ENCODE measurements at regions of chr3 and their contacts with region 1.

Region 1: DNA sequence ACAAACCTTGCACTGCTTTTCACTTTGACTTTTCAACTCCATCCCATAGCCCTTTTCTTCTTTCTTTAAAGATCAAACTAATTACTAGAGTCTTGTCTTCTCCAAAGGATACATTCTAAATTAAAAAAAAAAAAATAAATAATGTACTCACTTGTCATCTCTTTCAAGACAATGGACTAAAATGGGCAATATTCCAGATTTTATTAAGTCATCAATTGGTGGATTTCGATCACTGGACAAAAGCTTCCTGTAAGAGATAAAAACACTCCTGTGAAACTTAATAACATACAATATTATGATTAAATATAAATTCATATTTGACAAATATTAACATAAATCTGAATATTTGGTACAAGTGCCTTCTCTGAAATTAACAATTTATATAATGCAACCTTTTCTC is 34.1 kb downstream of the KPNA4 start:
- DNase-seq: no peak
- ATAC-seq: no peak
- H3K4me3 ChIP-seq: no peak overlapping the region
- H3K27ac ChIP-seq: no peak overlapping the region
- H3K4me1 ChIP-seq: no peaks in the 10 kb centered on the region
- H3K27me3 ChIP-seq: no peaks in the 10 kb centered on the region
- CTCF ChIP-seq: no peak
- POLR2A ChIP-seq: no peak
- RAD21 ChIP-seq: no peak

Region 2: GRCh38 chr3:160302806-160303205 is 228.5 kb before region 1 on chr3:
- CTCF ChIA-PET with region 1: no interaction called
- POLR2A ChIA-PET with region 1: no interaction called
- dilution Hi-C with region 1: no loop called
- in situ Hi-C with region 1: no loop called
- intact Hi-C with region 1: no loop called
- DNase-seq: no peak
- ATAC-seq: no peak
- H3K4me3 ChIP-seq: no peak overlapping the region
- H3K27ac ChIP-seq: no peak overlapping the region
- H3K4me1 ChIP-seq: no peaks in the 10 kb centered on the region
- H3K27me3 ChIP-seq: no peaks in the 10 kb centered on the region
- CTCF ChIP-seq: no peak
- POLR2A ChIP-seq: no peak
- RAD21 ChIP-seq: no peak

Region 3: DNA sequence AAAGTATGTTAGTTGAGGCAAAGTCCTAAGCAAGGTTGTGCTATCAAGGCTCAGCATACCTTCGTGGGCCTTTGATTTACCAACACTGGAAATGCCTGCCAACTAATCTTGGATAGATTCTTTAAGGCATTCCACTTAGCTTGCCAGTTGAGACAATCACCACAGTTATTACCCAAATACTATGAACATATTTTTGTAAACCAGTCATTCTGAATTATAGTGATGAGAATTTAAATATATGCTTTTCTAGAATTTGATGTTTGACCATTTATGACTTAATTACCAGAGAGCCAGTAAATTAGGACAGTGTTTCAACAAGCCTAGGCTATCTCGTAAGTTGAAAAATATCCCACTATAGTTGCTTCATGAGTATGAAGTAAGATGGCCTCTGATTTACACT is 97.2 kb before region 1 on chr3:
- CTCF ChIA-PET with region 1: no interaction called
- POLR2A ChIA-PET with region 1: no interaction called
- dilution Hi-C with region 1: no loop called
- in situ Hi-C with region 1: no loop called
- intact Hi-C with region 1: no loop called
- DNase-seq: peak; percentile 60
- ATAC-seq: peak; percentile 81
- H3K4me3 ChIP-seq: no peak overlapping the region
- H3K27ac ChIP-seq: peak overlapping the region; percentile 29; the same call in 1 of the 2 replicates
- H3K4me1 ChIP-seq: peaks cover 4% of the 10 kb centered on the region; the same call in 1 of the 2 replicates
- H3K27me3 ChIP-seq: no peaks in the 10 kb centered on the region
- CTCF ChIP-seq: no peak
- POLR2A ChIP-seq: no peak
- RAD21 ChIP-seq: no peak

Region 4: DNA sequence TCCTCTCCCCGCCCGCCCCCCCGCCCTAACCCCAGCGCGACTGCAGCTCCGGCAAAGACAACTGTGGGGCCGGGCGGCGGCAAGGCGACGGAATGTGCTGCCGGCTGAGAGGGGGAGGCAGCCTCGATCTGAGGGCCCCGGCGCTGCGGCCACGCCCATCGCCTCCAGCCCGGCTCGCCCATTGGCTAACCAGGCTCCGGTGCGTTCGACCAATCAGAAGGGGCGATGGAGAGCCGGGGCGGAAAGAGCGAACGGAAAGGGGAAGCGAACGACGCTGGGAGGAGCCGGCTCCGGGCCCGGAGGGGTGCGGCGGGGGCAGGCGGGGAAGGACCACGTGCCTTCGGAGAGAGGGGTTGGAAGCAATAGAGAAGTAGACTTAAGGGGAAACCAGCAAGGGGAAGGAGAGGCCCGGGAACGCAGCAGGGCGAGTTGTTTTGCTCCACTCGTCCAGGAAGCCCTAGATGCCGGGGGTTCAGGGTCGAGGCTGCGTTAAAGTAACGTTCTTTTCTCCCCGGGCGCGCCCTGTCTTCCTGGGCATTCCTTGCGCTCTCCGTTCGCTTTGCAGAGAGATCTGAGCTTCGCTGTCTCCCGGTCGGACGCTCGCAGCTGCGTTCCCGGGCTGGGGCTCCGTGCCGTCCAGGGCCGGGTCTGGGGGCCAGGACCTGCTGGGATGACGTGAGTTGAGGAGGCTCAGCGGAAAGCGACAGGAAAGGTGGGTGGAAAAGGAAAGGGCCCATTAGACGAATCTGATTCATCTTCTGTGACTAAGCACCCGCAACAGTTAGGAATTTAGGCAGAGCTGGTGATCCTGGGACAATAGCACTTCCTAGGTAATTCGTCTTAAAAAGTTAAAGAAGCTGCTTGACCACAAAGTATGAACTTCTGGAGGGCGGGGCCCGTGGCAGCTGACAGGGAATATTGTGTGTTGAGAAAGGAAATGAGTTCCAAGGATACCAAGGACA is 34.4 kb after region 1 on chr3 and contains the start of gene KPNA4:
- CTCF ChIA-PET with region 1: no interaction called
- POLR2A ChIA-PET with region 1: no interaction called
- dilution Hi-C with region 1: no loop called
- in situ Hi-C with region 1: no loop called
- intact Hi-C with region 1: loop called (anchors 5 kb)
- DNase-seq: peak; percentile 96
- ATAC-seq: peak; percentile 91
- H3K4me3 ChIP-seq: peak within 1 kb of the TSS; percentile 75
- H3K27ac ChIP-seq: peak within 1 kb of the TSS; percentile 95
- H3K4me1 ChIP-seq: no peaks in the 10 kb centered on the region
- H3K27me3 ChIP-seq: no peaks in the 10 kb centered on the region
- CTCF ChIP-seq: no peak
- POLR2A ChIP-seq: peak; percentile 93
- RAD21 ChIP-seq: no peak
- total RNA-seq, gene KPNA4: 46.1 and 57.8 TPM in 2 replicates

Region 5: DNA sequence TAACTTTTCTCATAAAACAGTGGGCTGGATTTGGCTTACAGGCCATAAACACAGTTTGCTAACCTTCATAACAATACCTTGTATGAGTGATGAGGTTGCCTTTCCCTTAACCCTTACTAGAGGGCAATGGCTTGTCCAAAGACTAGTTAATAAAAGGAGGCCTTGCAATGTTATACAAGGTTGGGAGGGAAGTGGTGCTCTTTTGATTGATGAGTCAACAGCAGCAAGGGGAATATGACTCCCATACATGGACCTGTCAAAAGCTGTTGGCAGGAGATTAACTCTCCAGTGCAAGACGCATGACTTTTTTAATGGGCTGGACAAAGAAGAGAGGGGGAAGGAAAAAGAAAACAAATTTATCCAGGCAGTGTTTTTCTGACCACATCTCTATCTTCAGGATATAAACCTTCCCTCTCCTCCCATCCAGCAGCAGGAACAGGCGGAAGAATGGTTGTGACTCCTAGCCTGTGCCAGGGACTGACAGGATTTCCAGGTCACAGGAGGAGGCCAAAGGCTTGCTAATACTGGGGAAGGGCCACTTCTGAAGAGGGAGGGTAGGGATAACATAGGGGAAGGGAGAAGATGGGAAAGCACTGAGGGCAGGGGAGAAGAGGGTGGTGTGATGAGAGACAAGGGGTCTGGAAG is 110.5 kb after region 1 on chr3:
- CTCF ChIA-PET with region 1: no interaction called
- POLR2A ChIA-PET with region 1: no interaction called
- dilution Hi-C with region 1: no loop called
- in situ Hi-C with region 1: no loop called
- intact Hi-C with region 1: no loop called
- DNase-seq: peak; percentile 8
- ATAC-seq: no peak
- H3K4me3 ChIP-seq: no peak overlapping the region
- H3K27ac ChIP-seq: no peak overlapping the region
- H3K4me1 ChIP-seq: no peaks in the 10 kb centered on the region
- H3K27me3 ChIP-seq: no peaks in the 10 kb centered on the region
- CTCF ChIP-seq: no peak
- POLR2A ChIP-seq: no peak
- RAD21 ChIP-seq: no peak

Region 6: GRCh38 chr3:161239703-161240102 is 708.4 kb after region 1 on chr3:
- CTCF ChIA-PET with region 1: no interaction called
- POLR2A ChIA-PET with region 1: no interaction called
- dilution Hi-C with region 1: no loop called
- in situ Hi-C with region 1: no loop called
- intact Hi-C with region 1: loop called (anchors 10 kb)
- DNase-seq: peak; percentile 41
- ATAC-seq: 0 out of 2 replicates have a peak, but pooled peaks have one; percentile 27
- H3K4me3 ChIP-seq: no peak overlapping the region
- H3K27ac ChIP-seq: no peak overlapping the region
- H3K4me1 ChIP-seq: no peaks in the 10 kb centered on the region
- H3K27me3 ChIP-seq: no peaks in the 10 kb centered on the region
- CTCF ChIP-seq: no peak
- POLR2A ChIP-seq: no peak
- RAD21 ChIP-seq: no peak